Naive thymus-derived CD4-positive, alpha-beta T cell (primary cell): ENCODE measurements at regions of chr2 and their contacts with region 1.

Region 1: DNA sequence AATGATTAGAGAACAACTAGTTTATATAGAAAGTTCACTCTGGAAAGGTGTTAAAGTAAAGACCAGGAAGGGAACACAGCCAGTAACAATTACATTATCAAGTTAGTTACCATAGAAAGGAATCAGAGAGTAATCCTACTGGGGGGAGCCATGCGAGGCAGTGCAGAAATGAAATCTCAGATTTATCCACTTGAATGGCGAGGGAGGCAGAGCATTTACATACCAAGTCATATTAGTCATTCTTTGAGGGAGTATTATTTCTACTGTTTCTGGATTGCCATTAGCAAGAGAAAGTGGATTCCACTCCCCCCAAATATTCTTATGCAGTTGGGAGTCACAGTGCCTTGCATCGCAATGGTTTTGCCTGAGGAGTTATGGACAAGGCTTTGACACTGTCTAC is 472.7 kb upstream of the TRIB2 start:
- DNase-seq: no peak
- ATAC-seq: no peak
- H3K4me3 ChIP-seq: no peak overlapping the region
- H3K4me3 Mint-ChIP-seq: no peak overlapping the region
- H3K27ac ChIP-seq: no peak overlapping the region
- H3K27ac Mint-ChIP-seq: no peak overlapping the region
- H3K4me1 ChIP-seq: no peaks in the 10 kb centered on the region
- H3K4me1 Mint-ChIP-seq: no peaks in the 10 kb centered on the region
- H3K27me3 ChIP-seq: no peaks in the 10 kb centered on the region
- H3K27me3 Mint-ChIP-seq: peaks cover 0 to 36% (median 0%) of the 10 kb centered on the region in 5 donors

Region 2: DNA sequence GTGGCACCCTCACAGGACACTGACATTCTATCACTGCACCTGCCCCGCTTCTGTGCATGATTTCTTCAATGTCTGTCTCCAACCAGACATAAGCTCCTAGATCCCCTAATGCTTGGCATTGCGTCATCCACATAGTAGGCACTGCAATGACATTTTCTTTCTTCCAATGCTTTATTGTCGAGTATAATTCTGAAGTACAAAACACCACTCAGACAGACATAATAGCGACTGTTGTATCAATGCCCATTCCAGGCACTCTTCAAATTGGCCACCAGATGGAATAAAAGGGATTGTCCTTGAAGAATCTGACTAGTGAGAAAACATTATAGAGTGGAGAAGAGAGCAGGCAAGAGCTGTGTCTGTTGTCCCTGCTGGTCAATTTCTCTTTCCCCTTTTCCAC is 408.7 kb before region 1 on chr2:
- CTCF ChIA-PET with region 1: no interaction called
- POLR2A ChIA-PET with region 1: no interaction called
- intact Hi-C with region 1: no loop called
- DNase-seq: no peak
- ATAC-seq: no peak
- H3K4me3 ChIP-seq: no peak overlapping the region
- H3K4me3 Mint-ChIP-seq: no peak overlapping the region
- H3K27ac ChIP-seq: no peak overlapping the region
- H3K27ac Mint-ChIP-seq: peak overlapping the region in 1 of 9 donors; percentile 10
- H3K4me1 ChIP-seq: peaks cover 4 to 8% of the 10 kb centered on the region in 2 donors
- H3K4me1 Mint-ChIP-seq: peaks cover 10 to 30% (median 16%) of the 10 kb centered on the region in 7 donors
- H3K27me3 ChIP-seq: no peaks in the 10 kb centered on the region
- H3K27me3 Mint-ChIP-seq: peaks cover 0 to 82% (median 0%) of the 10 kb centered on the region in 5 donors

Region 3: DNA sequence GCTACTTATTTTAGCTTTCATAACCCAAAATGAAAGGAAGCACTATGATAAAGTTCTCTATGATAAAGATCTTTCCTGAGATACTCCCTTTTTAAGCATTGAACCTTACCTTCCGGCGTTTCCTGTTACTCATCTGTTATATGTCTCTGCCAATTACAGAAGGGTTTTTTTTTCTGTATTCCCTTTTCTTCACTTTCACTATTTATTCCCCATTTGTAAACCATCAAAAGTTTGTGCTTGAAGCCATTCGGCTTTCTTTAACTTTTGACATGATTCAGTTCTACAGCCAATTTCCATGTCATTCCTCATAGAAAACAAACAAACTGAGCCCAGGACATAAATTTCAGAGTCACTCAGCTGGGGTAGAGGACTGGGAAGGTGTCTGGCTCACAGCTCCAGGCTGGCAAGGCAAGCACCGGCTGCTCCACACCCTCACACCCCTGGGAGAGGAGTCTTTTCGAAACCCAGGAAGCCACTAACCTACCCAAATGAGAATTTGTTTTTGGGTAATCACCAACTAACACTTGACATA is 43.2 kb after region 1 on chr2:
- CTCF ChIA-PET with region 1: no interaction called
- POLR2A ChIA-PET with region 1: no interaction called
- intact Hi-C with region 1: loop called in 1 of 2 experiments (anchors 5 kb)
- DNase-seq: no peak
- ATAC-seq: no peak
- H3K4me3 ChIP-seq: no peak overlapping the region
- H3K4me3 Mint-ChIP-seq: peak overlapping the region in 3 of 10 donors; percentile 0 to 44 (median 21)
- H3K27ac ChIP-seq: no peak overlapping the region
- H3K27ac Mint-ChIP-seq: peak overlapping the region in 2 of 9 donors; percentile 13 to 18
- H3K4me1 ChIP-seq: no peaks in the 10 kb centered on the region
- H3K4me1 Mint-ChIP-seq: peaks cover 0 to 44% (median 18%) of the 10 kb centered on the region in 7 donors
- H3K27me3 ChIP-seq: no peaks in the 10 kb centered on the region
- H3K27me3 Mint-ChIP-seq: peaks cover 0 to 24% (median 0%) of the 10 kb centered on the region in 5 donors

Region 4: DNA sequence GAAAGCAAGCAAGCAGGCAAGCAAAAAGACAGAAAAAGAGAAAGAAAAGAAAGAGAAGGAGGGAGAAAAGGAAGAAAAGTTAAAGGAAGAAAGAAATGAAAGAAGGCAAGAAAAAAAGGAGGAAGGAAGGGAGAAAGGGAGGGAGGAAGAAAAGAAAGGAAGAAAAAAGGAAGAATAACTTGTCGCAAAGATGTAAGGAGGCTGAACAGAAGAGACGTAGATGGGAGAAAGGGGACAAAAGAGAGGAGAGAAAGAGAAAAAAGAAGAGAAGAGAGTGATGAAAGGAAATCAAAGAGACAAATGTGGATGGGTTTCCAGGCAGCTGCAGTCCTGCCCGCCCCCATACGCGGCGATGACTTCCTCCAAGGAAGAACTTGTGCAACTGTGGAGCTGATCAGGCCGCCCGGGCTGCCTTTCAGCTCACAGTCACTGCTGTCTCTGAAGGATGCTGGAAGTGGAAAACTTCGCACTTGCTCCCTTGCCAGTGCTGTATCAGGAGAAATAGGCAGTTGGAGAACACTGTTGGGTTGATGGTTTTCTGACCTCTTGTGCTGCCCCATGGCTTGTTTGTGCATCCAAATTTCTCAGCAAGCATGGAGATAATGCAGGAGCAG is 525.5 kb after region 1 on chr2:
- CTCF ChIA-PET with region 1: no interaction called
- POLR2A ChIA-PET with region 1: no interaction called
- intact Hi-C with region 1: no loop called
- DNase-seq: no peak
- ATAC-seq: no peak
- H3K4me3 ChIP-seq: no peak overlapping the region
- H3K4me3 Mint-ChIP-seq: no peak overlapping the region
- H3K27ac ChIP-seq: no peak overlapping the region
- H3K27ac Mint-ChIP-seq: peak overlapping the region in 1 of 9 donors; percentile 8
- H3K4me1 ChIP-seq: no peaks in the 10 kb centered on the region
- H3K4me1 Mint-ChIP-seq: peaks cover 0 to 5% (median 4%) of the 10 kb centered on the region in 7 donors
- H3K27me3 ChIP-seq: no peaks in the 10 kb centered on the region
- H3K27me3 Mint-ChIP-seq: peaks cover 23 to 42% (median 29%) of the 10 kb centered on the region in 5 donors